GM23248 (cell line): ENCODE measurements at regions of chr6 and their contacts with region 1.

Region 1: GRCh38 chr6:145929037-145929633 is 35.0 kb downstream of the SHPRH start:
- DNase-seq: peak; percentile 60
- H3K4me3 ChIP-seq: no peak overlapping the region
- H3K27ac ChIP-seq: no peak overlapping the region
- H3K4me1 ChIP-seq: no peaks in the 10 kb centered on the region
- H3K27me3 ChIP-seq: no peaks in the 10 kb centered on the region

Region 2: DNA sequence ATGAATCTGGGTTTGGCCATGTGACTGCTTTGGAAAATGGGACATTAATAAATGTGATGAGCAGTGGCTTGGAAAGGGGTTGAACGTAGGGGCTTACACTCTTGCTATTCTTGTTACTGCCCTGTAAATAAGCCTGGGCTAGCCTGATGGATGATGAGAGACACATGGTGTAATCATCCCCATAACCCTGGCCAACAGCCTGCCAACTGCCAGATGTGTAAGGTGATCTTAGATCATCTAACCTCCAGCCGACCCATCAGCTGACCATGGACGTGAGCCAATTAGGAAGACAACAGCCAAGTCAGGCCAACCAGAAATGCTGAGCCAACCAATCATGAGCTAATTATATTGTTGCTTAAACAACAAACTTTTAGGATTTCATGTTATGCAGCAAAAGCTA is 139.7 kb before region 1 on chr6:
- in situ Hi-C with region 1: no loop called
- DNase-seq: no peak
- H3K4me3 ChIP-seq: no peak overlapping the region
- H3K27ac ChIP-seq: no peak overlapping the region
- H3K4me1 ChIP-seq: no peaks in the 10 kb centered on the region
- H3K27me3 ChIP-seq: no peaks in the 10 kb centered on the region

Region 3: GRCh38 chr6:146543211-146543939 is 614.2 kb after region 1 on chr6 and contains the start of gene RAB32:
- in situ Hi-C with region 1: loop called (anchors 25 kb)
- DNase-seq: peak; percentile 99
- H3K4me3 ChIP-seq: peak within 1 kb of the TSS; percentile 84
- H3K27ac ChIP-seq: peak within 1 kb of the TSS; percentile 92
- H3K4me1 ChIP-seq: peaks cover 22% of the 10 kb centered on the region
- H3K27me3 ChIP-seq: no peaks in the 10 kb centered on the region
- total RNA-seq, gene RAB32: 103 and 165 TPM in 2 replicates